ENCODE measurements at regions of chr6 and their contacts with region 1.

Region 1: DNA sequence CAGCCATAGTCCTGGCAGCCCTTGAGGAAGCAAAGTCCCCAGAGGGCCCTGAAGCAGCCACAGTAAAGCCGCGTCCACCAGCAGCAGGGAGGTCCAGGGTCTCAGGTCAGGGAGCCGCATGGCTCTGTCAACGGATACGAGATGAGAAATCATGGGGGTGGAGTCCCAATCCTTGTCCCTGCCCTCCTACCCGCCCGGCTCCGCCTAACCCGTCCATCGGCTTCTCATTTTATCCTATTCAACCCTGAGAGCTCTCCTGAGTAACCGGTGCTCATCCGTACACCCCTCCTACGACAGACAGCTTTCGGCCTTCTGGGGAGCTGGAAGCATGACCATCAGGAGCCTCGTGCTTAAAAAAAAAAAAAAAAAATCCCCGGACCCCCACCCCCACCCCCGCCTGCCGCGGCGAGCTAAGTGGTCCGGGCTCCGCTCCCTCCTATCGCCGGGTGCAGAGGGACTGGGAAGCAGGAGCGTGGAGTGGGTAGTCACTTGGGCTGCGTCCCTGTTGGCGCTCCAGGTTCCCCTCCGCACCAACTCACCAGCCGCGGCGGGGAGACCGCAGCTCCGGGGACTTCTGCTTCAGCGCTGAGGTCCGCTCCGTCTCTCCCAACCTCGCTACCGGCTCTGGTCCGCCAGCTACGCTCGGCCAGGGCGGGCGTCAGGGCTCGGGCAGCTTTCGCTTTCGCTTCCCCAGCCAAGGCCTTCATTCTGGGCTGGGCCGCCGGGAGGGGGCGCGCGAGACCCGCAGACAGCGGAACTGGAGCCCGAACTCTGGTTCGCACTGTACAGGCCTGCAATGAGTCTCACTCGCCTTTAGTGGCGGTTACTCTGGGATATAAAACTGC is at the start of gene TAP2:
- DNase-seq: peak; percentile 98
- H3K4me3 Mint-ChIP-seq: peak within 1 kb of the TSS; percentile 73
- H3K27ac Mint-ChIP-seq: peak within 1 kb of the TSS; percentile 91
- H3K4me1 Mint-ChIP-seq: peaks cover 76% of the 10 kb centered on the region
- H3K27me3 Mint-ChIP-seq: no peaks in the 10 kb centered on the region
- total RNA-seq, gene TAP2: 134 to 143 TPM

Region 2: DNA sequence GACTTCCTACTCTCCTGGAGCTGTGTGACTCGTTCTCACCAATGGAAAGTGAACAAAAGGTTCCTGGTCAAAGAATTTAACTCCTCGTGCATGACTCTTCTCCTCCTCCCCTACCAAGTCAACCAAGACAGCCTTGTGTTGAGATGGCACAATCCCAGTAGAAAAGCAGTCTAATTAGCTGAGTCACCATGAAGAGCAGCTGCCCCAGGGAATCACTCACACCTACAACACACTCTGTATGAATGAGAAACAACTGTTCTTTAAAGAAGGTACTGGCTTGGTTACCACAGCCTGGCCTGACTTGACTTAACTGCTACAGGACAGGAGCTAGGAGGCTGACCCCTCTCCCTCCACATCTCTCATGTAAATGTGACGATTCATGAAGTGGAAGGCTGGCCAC is 18.6 kb before region 1 on chr6:
- CTCF ChIA-PET with region 1: interaction called, 11 read pairs
- POLR2A ChIA-PET with region 1: interaction called, 3 read pairs
- intact Hi-C with region 1: no loop called
- DNase-seq: no peak
- H3K4me3 Mint-ChIP-seq: no peak overlapping the region
- H3K27ac Mint-ChIP-seq: no peak overlapping the region
- H3K4me1 Mint-ChIP-seq: no peaks in the 10 kb centered on the region
- H3K27me3 Mint-ChIP-seq: no peaks in the 10 kb centered on the region

Region 3: GRCh38 chr6:32853541-32854375 is 15.4 kb after region 1 on chr6 and contains the starts of genes PSMB9 and TAP1:
- CTCF ChIA-PET with region 1: interaction called, 917 read pairs
- POLR2A ChIA-PET with region 1: interaction called, 313 read pairs
- intact Hi-C with region 1: loop called (anchors 1 kb)
- DNase-seq: peak; percentile 97
- H3K4me3 Mint-ChIP-seq: peak within 1 kb of the TSS; percentile 99
- H3K27ac Mint-ChIP-seq: peak within 1 kb of the TSS; percentile 98
- H3K4me1 Mint-ChIP-seq: peaks cover 54% of the 10 kb centered on the region
- H3K27me3 Mint-ChIP-seq: no peaks in the 10 kb centered on the region
- total RNA-seq, gene PSMB9: 296 to 302 TPM
- total RNA-seq, gene TAP1: 245 to 258 TPM

Region 4: GRCh38 chr6:32894080-32895005 is 56.0 kb after region 1 on chr6:
- CTCF ChIA-PET with region 1: interaction called, 20 read pairs
- POLR2A ChIA-PET with region 1: interaction called, 7 read pairs
- intact Hi-C with region 1: no loop called
- DNase-seq: peak; percentile 97
- H3K4me3 Mint-ChIP-seq: peak overlapping the region; percentile 98
- H3K27ac Mint-ChIP-seq: peak overlapping the region; percentile 94
- H3K4me1 Mint-ChIP-seq: peaks cover 35% of the 10 kb centered on the region
- H3K27me3 Mint-ChIP-seq: no peaks in the 10 kb centered on the region

Region 5: DNA sequence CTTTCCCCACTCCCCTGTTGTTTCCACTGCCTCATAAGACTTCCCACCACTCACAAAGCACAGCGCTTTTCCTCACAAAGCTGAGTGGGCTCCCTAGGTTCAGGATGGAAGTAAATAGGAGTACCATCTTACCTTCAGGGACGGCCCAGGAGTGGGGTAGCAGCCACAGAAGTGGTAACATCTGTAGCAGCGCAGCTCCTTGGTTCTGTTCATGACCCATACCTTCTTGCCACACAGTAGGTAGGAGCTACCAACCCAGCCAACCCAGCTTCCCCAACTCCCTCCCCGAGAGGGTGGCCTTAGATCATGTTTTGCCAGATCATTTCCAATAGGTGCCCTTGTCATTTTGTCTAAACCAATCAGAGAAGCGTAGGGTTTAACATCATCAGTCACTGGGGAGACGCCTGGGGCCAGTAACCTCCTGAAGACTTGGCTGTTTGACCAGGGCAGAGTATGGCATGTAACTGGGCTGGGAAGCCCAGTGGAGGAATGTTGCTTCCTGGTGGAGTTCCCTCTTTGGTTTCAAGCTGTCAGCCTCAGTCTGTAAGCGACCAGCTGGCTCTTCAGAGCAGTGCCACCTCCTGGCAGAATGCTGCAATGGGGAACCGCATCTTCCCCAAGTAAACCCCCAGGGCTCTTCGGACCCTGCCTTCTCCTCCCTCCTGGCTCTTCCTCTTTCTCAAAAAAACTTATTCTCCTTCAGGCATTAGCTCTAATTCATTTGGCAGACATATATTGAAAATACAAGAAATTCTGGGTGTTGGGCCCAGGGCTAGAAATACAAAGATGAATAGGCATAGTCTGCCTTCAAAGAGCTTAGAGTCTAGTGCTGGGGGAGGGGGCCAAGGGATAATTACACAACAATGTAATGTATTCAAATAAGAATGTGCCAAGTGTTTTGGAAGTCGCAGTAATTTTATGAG is 114.7 kb after region 1 on chr6 and contains the start of gene HLA-DMA:
- CTCF ChIA-PET with region 1: interaction called, 18 read pairs
- POLR2A ChIA-PET with region 1: interaction called, 6 read pairs
- intact Hi-C with region 1: no loop called
- DNase-seq: peak; percentile 83
- H3K4me3 Mint-ChIP-seq: peak within 1 kb of the TSS; percentile 64
- H3K27ac Mint-ChIP-seq: peak within 1 kb of the TSS; percentile 39
- H3K4me1 Mint-ChIP-seq: peaks cover 51% of the 10 kb centered on the region
- H3K27me3 Mint-ChIP-seq: no peaks in the 10 kb centered on the region
- total RNA-seq, gene HLA-DMA: 9.6 to 10.2 TPM